Transverse colon (tissue), 4 donors: ENCODE measurements at regions of chr5 and their contacts with region 1.

Region 1: DNA sequence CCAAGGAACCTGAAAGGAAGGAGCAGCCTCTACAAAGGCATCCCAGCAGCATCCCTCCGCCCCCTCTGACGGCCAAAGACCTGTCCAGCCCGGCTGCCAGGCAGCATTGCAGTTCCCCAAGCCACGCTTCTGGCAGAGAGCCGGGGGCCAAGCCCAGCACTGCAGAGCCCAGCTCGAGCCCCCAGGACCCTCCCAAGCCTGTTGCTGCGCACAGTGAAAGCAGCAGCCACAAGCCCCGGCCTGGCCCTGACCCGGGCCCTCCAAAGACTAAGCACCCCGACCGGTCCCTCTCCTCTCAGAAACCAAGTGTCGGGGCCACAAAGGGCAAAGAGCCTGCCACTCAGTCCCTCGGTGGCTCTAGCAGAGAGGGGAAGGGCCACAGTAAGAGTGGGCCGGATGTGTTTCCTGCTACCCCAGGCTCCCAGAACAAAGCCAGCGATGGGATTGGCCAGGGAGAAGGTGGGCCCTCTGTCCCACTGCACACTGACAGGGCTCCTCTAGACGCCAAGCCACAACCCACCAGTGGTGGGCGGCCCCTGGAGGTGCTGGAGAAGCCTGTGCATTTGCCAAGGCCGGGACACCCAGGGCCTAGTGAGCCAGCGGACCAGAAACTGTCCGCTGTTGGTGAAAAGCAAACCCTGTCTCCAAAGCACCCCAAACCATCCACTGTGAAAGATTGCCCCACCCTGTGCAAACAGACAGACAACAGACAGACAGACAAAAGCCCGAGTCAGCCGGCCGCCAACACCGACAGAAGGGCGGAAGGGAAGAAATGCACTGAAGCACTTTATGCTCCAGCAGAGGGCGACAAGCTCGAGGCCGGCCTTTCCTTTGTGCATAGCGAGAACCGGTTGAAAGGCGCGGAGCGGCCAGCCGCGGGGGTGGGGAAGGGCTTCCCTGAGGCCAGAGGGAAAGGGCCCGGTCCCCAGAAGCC is 30.8 kb downstream of the CD180 start:
- DNase-seq: peak; percentile 90
- H3K4me3 ChIP-seq: peak overlapping the region in 3 of 4 donors; percentile 21 to 43 (median 23)
- H3K27ac ChIP-seq: peak overlapping the region; percentile 75 to 84 (median 76)
- H3K4me1 ChIP-seq: peaks cover 4 to 18% (median 12%) of the 10 kb centered on the region in 4 donors
- H3K27me3 ChIP-seq: no peaks in the 10 kb centered on the region
- CTCF ChIP-seq: peak; percentile 71 to 87 (median 82)
- EP300 ChIP-seq: no peak
- POLR2A ChIP-seq: no peak

Region 2: DNA sequence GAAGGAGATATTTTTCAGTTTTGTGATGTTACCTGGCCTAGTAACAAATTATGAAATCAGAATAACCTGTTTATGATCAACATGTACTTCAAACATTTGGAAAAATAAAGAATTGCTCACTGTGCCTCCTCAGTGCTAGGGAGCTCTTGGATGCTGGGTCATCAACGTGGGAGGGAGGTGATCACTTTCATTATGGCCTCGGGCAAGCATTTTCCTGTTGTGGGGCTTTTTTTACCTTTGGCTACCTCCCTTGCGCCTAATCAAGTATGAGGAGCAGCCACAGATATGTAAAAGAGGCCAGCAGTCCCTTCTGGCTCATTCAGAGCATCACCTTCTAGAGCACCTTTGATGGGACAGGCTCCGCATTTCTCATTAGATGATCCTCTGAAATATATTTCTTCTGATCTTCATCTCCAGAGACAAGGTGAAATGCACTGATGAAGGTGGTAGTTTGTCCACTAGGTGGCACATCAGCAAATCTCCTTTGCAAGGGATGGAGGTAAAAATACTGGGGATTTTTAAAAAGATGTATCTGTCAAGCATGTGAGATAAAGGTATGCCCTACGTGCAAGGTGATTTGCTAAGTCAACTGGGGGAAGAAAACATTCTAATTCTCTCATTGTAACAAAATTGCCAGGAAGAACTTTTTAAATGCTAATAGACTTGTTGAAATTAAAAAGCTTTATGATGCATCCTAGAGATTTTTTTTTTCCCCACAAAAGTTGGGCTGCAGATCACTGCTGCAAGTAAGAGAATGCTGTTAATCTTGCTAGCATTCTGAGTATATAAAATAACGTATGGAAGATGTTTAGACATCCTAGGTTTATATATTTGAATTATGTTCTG is 351.4 kb before region 1 on chr5:
- in situ Hi-C with region 1: loop called in 2 of 4 experiments (anchors 25 kb)
- intact Hi-C with region 1: no loop called
- DNase-seq: peak; percentile 37
- H3K4me3 ChIP-seq: no peak overlapping the region
- H3K27ac ChIP-seq: no peak overlapping the region
- H3K4me1 ChIP-seq: no peaks in the 10 kb centered on the region
- H3K27me3 ChIP-seq: no peaks in the 10 kb centered on the region
- CTCF ChIP-seq: peak; percentile 57 to 74 (median 67)
- EP300 ChIP-seq: no peak
- POLR2A ChIP-seq: no peak

Region 3: DNA sequence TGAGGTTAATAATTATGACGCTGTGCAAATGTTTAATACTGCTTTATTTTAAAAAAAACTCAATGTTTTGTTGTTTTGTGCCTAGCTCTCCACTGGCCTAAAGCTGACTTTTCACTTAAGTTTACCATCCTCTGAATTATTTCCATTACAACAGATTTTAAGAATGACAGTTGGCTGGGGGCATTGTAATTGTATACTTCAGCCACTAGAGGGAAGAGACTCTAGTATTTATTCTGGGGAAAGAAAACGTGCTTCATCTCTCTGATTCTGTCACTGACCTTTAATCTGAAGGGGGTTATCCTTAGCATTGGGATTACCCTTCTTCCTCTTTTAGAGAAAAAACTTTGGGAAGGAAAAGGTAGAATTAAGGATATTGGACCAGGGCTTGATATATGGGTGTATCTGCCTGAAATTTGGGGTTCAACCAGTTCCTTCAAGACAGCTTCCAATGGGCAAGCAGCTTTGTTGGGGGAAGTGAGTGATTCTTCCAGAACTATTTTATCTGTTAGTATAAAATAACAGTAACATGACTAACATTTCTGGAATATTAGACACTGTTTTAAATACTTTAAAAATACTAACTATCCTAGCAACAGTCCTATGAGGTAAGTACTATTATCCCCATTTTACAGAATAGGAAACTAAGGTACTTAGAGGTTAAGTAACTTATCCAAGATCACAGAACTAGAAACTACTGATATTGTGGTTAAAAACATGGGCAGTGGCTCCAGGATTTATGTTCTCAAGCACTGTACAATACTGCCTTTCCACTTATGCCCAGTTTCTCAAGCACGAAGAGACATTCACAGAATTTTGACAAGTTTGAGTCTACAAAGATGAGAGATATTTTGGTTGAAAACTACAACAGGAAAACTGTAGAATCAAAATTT is 177.6 kb before region 1 on chr5:
- in situ Hi-C with region 1: no loop called
- intact Hi-C with region 1: no loop called
- DNase-seq: no peak
- H3K4me3 ChIP-seq: no peak overlapping the region
- H3K27ac ChIP-seq: no peak overlapping the region
- H3K4me1 ChIP-seq: peaks cover 6 to 48% (median 28%) of the 10 kb centered on the region in 4 donors
- H3K27me3 ChIP-seq: no peaks in the 10 kb centered on the region
- CTCF ChIP-seq: peak; percentile 86 to 91 (median 90)
- EP300 ChIP-seq: no peak
- POLR2A ChIP-seq: no peak

Region 4: DNA sequence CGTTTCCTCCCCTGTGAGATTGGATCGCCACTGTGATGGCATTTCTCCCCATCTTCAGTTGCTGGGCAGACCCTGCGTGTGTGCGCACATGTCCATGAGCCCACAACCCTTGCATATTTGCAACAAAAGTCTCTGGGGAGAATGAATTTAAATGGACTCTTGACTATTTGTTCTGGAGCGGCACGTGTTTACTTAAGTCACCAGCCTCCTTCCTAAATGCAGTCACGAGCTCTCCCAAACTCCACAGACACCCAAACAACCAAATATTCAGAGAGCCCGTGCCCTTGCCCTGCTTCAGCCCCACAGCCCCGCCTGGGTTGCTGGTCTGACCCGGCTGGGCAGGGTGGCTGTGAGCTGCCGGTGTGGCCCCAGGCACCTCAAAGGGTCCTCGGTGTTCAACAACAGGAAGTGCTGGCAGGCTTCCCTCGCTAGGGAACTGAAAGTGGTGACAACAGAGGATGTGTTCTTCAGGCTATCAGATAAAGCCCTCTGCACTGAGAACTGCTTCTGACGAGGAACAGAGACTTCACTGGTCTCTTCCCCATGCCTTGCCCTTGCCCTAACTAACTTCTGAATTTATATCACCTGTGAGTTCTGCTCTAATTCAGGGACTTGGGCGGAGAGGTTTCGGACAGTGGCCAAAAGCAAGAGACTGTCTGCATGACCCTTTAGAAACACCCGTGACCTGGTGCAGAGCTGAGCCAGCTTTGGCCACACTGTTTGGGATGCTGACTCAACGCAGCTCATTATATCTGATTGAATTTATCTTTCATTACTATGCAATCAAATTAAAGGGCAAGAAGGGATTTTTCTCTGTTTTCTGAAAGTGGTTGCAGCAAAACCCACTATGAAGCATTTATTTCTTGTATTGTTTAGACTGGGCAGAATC is 50.0 kb after region 1 on chr5:
- in situ Hi-C with region 1: loop called in 2 of 4 experiments (anchors 5 to 10 kb)
- intact Hi-C with region 1: no loop called
- DNase-seq: peak; percentile 87
- H3K4me3 ChIP-seq: peak overlapping the region in 2 of 4 donors; percentile 4 to 8
- H3K27ac ChIP-seq: peak overlapping the region; percentile 53 to 79 (median 62)
- H3K4me1 ChIP-seq: peaks cover 9 to 24% (median 18%) of the 10 kb centered on the region in 4 donors
- H3K27me3 ChIP-seq: no peaks in the 10 kb centered on the region
- CTCF ChIP-seq: no peak
- EP300 ChIP-seq: no peak
- POLR2A ChIP-seq: peak; percentile 41